Endothelial cell of umbilical vein (primary cell): ENCODE measurements at regions of chr13 and their contacts with region 1.

Region 1: GRCh38 chr13:107373551-107373950 is 805.6 kb upstream of the ARGLU1 start:
- DNase-seq: peak; percentile 91
- H3K4me3 ChIP-seq: no peak overlapping the region
- H3K27ac ChIP-seq: no peak overlapping the region
- H3K4me1 ChIP-seq: peaks cover 36% of the 10 kb centered on the region
- H3K27me3 ChIP-seq: no peaks in the 10 kb centered on the region
- CTCF ChIP-seq: peak; percentile 59 to 63
- POLR2A ChIP-seq: no peak

Region 2: GRCh38 chr13:107211073-107211472 is 162.5 kb before region 1 on chr13:
- CTCF ChIA-PET with region 1: interaction called, 18 read pairs
- POLR2A ChIA-PET with region 1: no interaction called
- dilution Hi-C with region 1: no loop called
- intact Hi-C with region 1: loop called (anchors 1 kb)
- DNase-seq: peak; percentile 92
- H3K4me3 ChIP-seq: no peak overlapping the region
- H3K27ac ChIP-seq: no peak overlapping the region
- H3K4me1 ChIP-seq: peaks cover 13% of the 10 kb centered on the region
- H3K27me3 ChIP-seq: no peaks in the 10 kb centered on the region
- CTCF ChIP-seq: peak; percentile 84 to 92
- POLR2A ChIP-seq: no peak

Region 3: DNA sequence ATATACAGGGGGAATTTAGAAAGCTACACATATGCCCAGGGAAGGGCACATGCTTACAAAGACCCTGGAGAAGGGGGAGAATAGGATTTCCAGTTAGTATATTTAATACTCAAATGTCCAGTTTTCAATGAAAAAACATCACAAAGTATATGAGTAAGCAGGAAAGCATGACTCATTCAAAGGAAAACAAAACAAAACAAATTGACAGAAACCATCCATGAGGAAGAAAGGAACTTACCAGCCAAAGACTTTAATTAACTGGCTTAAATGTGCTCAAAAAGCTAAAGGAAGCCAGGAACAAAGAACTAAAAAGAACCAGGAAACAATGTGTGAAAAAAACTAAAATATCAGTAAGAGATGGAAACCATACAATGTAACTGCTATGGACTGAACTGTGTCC is 89.4 kb before region 1 on chr13:
- CTCF ChIA-PET with region 1: interaction called, 3 read pairs
- POLR2A ChIA-PET with region 1: no interaction called
- dilution Hi-C with region 1: no loop called
- intact Hi-C with region 1: loop called (anchors 1 kb)
- DNase-seq: peak; percentile 83
- H3K4me3 ChIP-seq: no peak overlapping the region
- H3K27ac ChIP-seq: peak overlapping the region; percentile 93
- H3K4me1 ChIP-seq: peaks cover 11% of the 10 kb centered on the region
- H3K27me3 ChIP-seq: no peaks in the 10 kb centered on the region
- CTCF ChIP-seq: no peak
- POLR2A ChIP-seq: no peak

Region 4: DNA sequence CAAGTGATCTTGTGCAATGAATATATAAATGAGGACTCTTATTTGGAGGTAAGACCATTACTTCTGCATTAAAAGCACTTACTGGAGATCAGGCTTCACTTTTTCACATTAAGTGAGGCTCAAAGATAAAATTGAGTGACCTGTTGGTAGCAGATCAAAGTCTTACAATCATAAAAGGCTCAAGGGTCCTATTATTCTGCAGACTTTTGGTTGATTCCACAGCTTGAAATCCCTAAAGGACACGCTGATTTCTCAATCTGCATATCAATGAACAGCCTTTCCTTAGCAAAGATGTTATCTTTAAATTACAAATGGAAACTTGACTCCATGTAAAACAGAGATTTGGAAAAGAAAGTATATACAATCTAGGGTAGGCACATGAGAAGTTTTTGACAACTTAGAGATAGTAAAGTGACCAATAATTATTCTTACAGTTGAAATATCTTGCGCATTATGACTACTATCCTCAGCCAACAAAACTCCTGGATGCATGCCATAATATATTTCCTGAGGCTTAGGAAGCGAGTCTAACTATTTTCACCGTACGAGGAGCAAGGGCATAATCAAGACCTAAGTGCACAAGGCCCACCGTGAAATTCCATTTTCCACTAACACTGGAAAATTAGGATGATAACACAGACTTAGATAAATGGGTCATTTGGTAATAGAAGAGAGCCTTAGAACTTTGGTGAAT is 201.1 kb after region 1 on chr13:
- CTCF ChIA-PET with region 1: no interaction called
- POLR2A ChIA-PET with region 1: no interaction called
- dilution Hi-C with region 1: no loop called
- intact Hi-C with region 1: loop called (anchors 5 kb)
- DNase-seq: peak; percentile 70
- H3K4me3 ChIP-seq: no peak overlapping the region
- H3K27ac ChIP-seq: no peak overlapping the region
- H3K4me1 ChIP-seq: peaks cover 22% of the 10 kb centered on the region
- H3K27me3 ChIP-seq: no peaks in the 10 kb centered on the region
- CTCF ChIP-seq: no peak
- POLR2A ChIP-seq: no peak

Region 5: DNA sequence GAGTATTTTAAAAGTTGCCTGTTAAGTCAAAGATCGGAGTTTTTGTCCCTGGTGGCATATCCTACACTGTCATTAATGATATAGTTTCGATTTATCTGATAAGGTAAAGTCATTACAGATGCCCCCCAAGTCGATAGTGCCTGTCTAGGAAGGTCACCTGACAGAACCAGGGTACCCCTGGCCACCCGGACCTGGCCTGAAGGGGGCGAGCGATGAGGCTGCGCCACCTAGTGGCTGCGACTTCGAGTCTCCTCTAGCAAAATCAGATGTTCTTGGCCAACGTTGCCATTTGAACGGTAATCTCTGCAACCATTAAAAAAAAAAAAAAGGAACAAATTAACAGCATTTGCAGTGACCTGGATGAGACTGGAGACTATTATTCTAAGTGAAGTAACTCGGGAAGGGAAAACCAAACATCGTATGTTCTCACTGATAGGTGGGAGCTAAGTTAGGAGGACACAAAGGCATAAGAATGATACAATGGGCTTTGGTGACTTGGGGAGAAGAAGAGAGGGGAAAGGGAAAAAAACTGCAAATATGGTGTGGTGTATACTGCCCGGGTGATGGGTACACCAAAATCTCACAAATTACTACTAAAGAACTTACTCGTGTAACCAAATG is 276.6 kb after region 1 on chr13:
- CTCF ChIA-PET with region 1: interaction called, 41 read pairs
- POLR2A ChIA-PET with region 1: no interaction called
- dilution Hi-C with region 1: no loop called
- intact Hi-C with region 1: loop called (anchors 1 kb)
- DNase-seq: peak; percentile 78
- H3K4me3 ChIP-seq: no peak overlapping the region
- H3K27ac ChIP-seq: no peak overlapping the region
- H3K4me1 ChIP-seq: peaks cover 4% of the 10 kb centered on the region
- H3K27me3 ChIP-seq: no peaks in the 10 kb centered on the region
- CTCF ChIP-seq: peak; percentile 82 to 93
- POLR2A ChIP-seq: no peak

Region 6: GRCh38 chr13:107778094-107778493 is 404.5 kb after region 1 on chr13:
- CTCF ChIA-PET with region 1: no interaction called
- POLR2A ChIA-PET with region 1: no interaction called
- dilution Hi-C with region 1: no loop called
- intact Hi-C with region 1: loop called (anchors 5 kb)
- DNase-seq: peak; percentile 36
- H3K4me3 ChIP-seq: no peak overlapping the region
- H3K27ac ChIP-seq: no peak overlapping the region
- H3K4me1 ChIP-seq: no peaks in the 10 kb centered on the region
- H3K27me3 ChIP-seq: no peaks in the 10 kb centered on the region
- CTCF ChIP-seq: no peak
- POLR2A ChIP-seq: no peak

Region 7: DNA sequence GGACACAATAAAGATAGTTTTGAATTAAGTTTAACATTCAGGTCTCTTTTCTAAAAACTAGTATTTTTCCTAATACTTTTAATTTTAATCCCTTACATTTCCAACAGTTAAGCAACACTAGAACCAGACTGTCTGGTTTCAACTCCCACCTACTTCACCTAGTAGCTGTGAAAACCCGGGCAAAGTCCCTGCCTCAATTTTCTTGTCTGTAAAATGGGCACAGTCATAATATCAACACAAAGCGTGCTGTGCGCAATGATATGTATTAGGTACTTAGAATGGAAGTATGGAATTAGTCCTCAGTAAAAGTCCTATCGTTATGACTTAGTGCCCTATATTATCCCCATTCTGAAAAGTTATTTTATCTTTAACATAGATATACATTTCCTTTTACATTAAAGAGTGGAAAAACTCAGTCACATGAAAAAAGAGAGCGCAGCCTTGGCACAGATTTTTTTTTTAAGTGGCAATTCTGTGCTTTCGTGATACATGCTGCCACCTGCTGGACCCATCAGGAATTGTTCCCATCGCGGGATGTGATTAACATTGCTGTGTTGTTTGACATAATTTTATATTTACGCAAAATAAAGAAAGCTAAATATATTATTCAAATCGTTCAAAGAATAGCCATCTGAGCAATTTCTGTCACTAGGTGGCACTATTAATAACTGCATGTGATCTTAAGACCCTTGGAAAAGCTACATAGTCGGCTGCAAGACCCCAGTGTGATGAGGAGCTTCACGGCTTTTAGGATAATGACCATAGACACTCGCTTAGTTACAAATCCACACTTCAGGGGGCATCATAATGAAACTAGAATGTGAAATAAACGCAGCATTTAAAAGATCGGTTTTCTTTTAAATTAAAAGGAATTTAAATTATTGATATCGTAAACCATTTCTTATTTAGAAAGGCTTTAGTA is 781.9 kb after region 1 on chr13:
- CTCF ChIA-PET with region 1: interaction called, 4 read pairs
- POLR2A ChIA-PET with region 1: no interaction called
- dilution Hi-C with region 1: no loop called
- intact Hi-C with region 1: loop called (anchors 5 kb)
- DNase-seq: peak; percentile 60
- H3K4me3 ChIP-seq: no peak overlapping the region
- H3K27ac ChIP-seq: no peak overlapping the region
- H3K4me1 ChIP-seq: no peaks in the 10 kb centered on the region
- H3K27me3 ChIP-seq: no peaks in the 10 kb centered on the region
- CTCF ChIP-seq: peak; percentile 72 to 79
- POLR2A ChIP-seq: no peak